ENCODE measurements at regions of chr1 and their contacts with region 1.

Region 1: DNA sequence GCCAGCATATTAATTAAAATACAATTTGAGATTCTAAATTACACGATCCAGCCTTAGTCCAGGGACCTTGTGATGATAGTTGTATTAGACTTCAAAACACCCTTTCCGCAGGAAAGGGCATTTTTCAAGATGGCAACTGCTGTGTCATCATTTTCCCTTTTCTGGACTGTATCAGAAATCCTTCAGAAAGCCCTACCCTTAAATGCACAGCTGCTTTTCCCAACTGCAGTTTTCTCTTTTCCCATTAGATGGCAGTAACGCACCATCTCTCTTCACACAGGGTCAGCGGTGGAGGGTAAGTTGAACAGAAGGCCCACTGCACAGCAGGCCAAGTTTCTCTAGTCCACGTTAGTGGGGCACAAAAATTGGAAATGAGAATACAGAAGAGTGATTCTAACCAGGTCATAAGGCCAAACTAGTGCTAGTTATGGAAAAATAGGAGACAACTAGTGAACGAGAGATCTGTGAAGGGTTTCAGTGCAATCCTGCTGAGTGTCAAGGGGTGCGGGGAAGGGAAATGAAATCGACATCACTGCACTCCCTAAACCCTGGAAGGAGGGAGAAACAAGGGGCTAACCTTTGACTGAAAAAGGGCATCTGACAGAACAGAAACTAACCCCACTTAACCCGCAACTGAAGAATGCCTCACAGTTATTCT is 22.1 kb upstream of the TDRD10 start:
- DNase-seq: peak; percentile 71
- H3K4me3 Mint-ChIP-seq: no peak overlapping the region
- H3K27ac Mint-ChIP-seq: peak overlapping the region; percentile 11
- H3K4me1 Mint-ChIP-seq: peaks cover 27% of the 10 kb centered on the region
- H3K27me3 Mint-ChIP-seq: no peaks in the 10 kb centered on the region

Region 2: DNA sequence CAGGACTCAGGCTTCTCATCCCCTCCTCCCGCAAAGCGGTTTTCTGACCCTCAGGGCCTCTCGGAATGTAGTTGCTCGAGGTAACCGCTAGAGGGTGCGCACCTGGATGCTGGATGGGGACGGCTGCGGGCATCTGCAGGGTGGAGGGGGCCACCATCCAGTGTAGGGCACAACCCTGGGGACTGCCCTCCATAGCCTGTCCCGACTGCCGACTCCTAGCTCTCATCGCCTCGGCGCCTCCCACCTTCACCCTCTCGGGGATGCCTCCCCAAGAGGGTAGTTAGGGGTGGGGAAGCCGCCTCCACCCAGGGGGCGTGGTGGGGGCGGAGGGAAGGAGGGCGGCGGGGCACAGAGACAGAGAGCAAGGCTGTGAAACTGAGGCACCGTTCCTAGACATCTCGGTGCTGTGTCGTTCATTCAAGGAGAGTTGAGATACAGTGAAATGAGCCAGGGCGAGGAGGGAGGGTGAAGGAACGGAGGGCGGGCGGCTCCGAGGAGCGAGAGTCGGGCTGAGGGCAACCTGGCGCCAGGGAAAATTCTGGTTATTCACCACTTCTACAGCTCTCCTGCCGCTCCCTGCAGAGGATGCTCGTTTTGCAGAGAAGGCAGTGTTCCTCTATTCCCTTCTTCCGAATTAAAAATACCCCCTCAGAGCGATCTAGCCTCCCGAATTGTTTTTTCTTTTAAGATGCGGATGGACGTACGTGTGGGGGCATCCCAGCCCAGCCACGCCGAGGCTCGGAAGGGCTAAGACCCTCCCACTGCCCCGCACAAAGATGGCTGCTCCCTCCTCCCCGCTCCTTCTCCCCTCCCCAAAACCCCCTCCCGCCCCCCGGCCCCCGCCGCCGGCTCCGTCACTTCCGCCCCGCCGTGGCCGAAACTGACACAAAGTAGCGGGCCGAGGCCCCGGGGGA is 155.0 kb before region 1 on chr1 and contains the start of gene ATP8B2:
- CTCF ChIA-PET with region 1: interaction called, 11 read pairs
- POLR2A ChIA-PET with region 1: no interaction called
- intact Hi-C with region 1: loop called (anchors 5 kb)
- DNase-seq: peak; percentile 91
- H3K4me3 Mint-ChIP-seq: peak within 1 kb of the TSS; percentile 98
- H3K27ac Mint-ChIP-seq: peak within 1 kb of the TSS; percentile 94
- H3K4me1 Mint-ChIP-seq: peaks cover 36% of the 10 kb centered on the region
- H3K27me3 Mint-ChIP-seq: no peaks in the 10 kb centered on the region
- total RNA-seq, gene ATP8B2: 58.5 to 59.9 TPM

Region 3: DNA sequence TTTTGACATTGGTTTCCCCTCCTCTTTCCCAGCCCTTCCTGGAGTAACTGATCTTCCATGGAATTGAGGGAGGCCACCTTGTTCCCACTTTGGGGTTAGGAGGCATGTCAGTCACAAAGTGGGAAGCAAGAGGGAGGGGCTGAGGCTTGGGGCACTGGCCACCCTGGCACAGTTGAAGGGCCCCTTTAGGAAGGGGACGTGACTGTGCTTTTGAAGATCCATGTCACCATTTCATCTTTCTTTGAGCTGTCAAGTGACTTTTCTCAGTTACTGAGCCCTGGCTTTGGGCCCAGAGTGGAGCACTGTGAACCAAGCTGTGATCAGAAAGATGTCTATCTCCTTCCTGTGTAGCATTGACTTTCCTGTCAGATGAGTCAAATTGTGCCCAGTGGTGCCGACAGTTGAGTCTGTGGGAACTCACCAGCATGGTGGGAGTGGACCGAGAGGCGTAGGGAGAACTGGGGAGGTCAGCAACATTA is 16.3 kb before region 1 on chr1:
- CTCF ChIA-PET with region 1: interaction called, 20 read pairs
- POLR2A ChIA-PET with region 1: interaction called, 4 read pairs
- intact Hi-C with region 1: no loop called
- DNase-seq: peak; percentile 89
- H3K4me3 Mint-ChIP-seq: peak overlapping the region; percentile 1
- H3K27ac Mint-ChIP-seq: peak overlapping the region; percentile 66
- H3K4me1 Mint-ChIP-seq: peaks cover 82% of the 10 kb centered on the region
- H3K27me3 Mint-ChIP-seq: no peaks in the 10 kb centered on the region

Region 4: DNA sequence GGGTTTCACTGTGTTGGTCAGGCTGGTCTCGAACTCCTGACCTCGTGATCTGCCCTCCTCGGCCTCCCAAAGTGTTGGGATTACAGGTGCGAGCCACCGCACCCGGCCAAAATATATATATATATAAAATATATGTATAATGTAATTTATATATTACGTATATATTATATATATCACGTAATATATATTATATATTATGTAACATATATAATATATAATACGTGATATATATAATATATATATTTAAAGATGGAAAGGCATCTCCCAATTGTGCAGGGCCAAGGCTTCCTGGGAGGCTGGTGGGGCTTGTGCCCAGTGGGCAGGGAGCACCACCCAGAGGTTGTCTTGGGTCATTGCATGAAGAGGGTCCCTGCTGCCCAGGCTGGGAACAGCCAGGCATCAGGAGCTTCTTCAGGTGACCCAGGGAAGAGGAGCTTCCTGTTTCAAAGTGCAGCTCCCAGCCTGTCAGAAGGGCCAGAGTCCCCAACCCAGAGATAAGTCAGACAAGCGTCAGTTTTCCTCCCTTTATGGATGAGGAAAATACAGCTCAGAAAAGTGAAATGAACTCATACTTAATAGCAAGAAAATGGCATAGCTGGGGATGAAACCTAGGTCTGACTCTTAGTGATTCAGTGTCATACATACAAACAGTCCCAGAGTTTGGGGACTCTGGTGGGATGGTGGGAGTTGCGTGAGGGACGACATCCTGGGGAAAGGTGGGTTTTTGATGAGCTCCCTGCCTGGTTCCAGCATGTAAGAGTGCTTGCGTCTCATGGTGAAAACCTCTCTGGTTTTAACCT is 66.6 kb after region 1 on chr1:
- CTCF ChIA-PET with region 1: interaction called, 201 read pairs
- POLR2A ChIA-PET with region 1: no interaction called
- intact Hi-C with region 1: loop called (anchors 1 kb)
- DNase-seq: peak; percentile 74
- H3K4me3 Mint-ChIP-seq: no peak overlapping the region
- H3K27ac Mint-ChIP-seq: peak overlapping the region; percentile 19
- H3K4me1 Mint-ChIP-seq: peaks cover 20% of the 10 kb centered on the region
- H3K27me3 Mint-ChIP-seq: no peaks in the 10 kb centered on the region

Region 5: GRCh38 chr1:154669464-154670282 is 189.8 kb after region 1 on chr1:
- CTCF ChIA-PET with region 1: interaction called, 18 read pairs
- POLR2A ChIA-PET with region 1: no interaction called
- intact Hi-C with region 1: no loop called
- DNase-seq: peak; percentile 86
- H3K4me3 Mint-ChIP-seq: no peak overlapping the region
- H3K27ac Mint-ChIP-seq: peak overlapping the region; percentile 24
- H3K4me1 Mint-ChIP-seq: no peaks in the 10 kb centered on the region
- H3K27me3 Mint-ChIP-seq: no peaks in the 10 kb centered on the region

Region 6: DNA sequence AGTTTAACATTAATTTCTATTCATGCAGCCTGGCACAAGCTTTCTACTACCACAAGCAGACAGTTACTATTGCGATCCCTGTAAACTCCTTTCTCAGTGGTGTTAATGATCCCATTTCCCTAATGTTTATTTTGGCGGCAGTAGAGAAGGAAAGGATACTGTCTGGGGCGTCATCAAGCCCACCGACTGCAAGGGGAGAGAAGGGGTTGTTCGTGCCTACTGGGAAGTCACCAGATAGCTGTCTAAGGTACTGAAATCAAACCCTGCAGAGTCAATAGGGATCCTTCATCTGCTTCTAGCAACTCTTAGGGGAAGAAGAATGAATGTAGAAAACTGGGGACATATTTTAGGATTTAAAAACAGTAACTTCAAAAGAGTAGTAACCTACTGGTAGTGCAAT is 223.3 kb after region 1 on chr1:
- CTCF ChIA-PET with region 1: no interaction called
- POLR2A ChIA-PET with region 1: no interaction called
- intact Hi-C with region 1: no loop called
- DNase-seq: no peak
- H3K4me3 Mint-ChIP-seq: no peak overlapping the region
- H3K27ac Mint-ChIP-seq: no peak overlapping the region
- H3K4me1 Mint-ChIP-seq: peaks cover 10% of the 10 kb centered on the region
- H3K27me3 Mint-ChIP-seq: peaks cover 8% of the 10 kb centered on the region

Region 7: DNA sequence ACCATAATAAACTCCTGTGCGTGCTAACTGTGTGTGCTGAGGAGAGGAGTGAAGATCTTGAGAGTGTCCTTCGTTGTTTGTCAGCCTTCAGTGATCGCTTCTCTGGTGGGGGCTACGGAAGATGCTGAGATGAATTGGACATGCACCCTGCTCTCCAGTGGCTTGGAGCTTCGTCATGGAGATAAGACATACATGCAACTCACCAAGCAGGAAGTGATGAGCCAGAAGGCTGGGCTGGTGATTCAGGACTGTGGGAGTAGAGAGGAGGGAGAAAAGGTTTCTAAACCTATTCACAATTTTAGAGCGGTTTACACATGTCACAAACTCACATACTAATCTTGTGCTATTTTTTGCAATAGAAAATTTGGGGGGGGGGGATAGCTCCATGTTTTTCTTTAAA is 256.9 kb after region 1 on chr1:
- CTCF ChIA-PET with region 1: no interaction called
- POLR2A ChIA-PET with region 1: no interaction called
- intact Hi-C with region 1: no loop called
- DNase-seq: peak; percentile 82
- H3K4me3 Mint-ChIP-seq: no peak overlapping the region
- H3K27ac Mint-ChIP-seq: peak overlapping the region; percentile 35
- H3K4me1 Mint-ChIP-seq: peaks cover 42% of the 10 kb centered on the region
- H3K27me3 Mint-ChIP-seq: peaks cover 25% of the 10 kb centered on the region

Measured in activated CD4-positive, alpha-beta memory T cell treated with anti-CD3 and anti-CD28 coated beads for 36 hours (primary cell).